ENCODE measurements at regions of chr20 and their contacts with region 1.

Region 1: GRCh38 chr20:36919715-36920333 is 31.7 kb downstream of the SAMHD1 start:
- DNase-seq: peak; percentile 62
- ATAC-seq: peak; percentile 52
- H3K4me3 Mint-ChIP-seq: no peak overlapping the region
- H3K27ac Mint-ChIP-seq: no peak overlapping the region
- H3K4me1 Mint-ChIP-seq: peaks cover 8% of the 10 kb centered on the region
- H3K27me3 Mint-ChIP-seq: no peaks in the 10 kb centered on the region

Region 2: DNA sequence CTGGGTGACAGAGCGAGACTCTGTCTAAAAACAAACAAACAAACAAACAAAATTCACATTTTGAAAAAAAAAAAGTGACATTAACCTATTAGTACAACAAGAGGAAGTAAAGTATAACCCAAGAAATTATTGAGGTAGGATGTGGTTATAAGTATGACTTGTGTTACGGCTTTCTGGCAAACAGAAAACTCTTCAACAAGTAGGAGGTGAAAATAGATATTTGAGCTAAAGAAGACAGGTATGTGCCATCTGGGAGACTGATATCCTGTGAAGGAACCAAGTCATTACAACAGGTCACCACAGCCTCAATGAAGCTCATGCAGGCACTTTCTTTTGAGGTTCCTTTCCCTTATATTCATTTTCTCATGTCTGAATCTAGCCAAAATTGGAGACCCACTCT is 15.1 kb before region 1 on chr20:
- CTCF ChIA-PET with region 1: interaction called, 15 read pairs
- POLR2A ChIA-PET with region 1: interaction called, 4 read pairs
- DNase-seq: no peak
- ATAC-seq: peak; percentile 51
- H3K4me3 Mint-ChIP-seq: peak overlapping the region; percentile 44
- H3K27ac Mint-ChIP-seq: peak overlapping the region; percentile 78
- H3K4me1 Mint-ChIP-seq: peaks cover 29% of the 10 kb centered on the region
- H3K27me3 Mint-ChIP-seq: no peaks in the 10 kb centered on the region

Region 3: DNA sequence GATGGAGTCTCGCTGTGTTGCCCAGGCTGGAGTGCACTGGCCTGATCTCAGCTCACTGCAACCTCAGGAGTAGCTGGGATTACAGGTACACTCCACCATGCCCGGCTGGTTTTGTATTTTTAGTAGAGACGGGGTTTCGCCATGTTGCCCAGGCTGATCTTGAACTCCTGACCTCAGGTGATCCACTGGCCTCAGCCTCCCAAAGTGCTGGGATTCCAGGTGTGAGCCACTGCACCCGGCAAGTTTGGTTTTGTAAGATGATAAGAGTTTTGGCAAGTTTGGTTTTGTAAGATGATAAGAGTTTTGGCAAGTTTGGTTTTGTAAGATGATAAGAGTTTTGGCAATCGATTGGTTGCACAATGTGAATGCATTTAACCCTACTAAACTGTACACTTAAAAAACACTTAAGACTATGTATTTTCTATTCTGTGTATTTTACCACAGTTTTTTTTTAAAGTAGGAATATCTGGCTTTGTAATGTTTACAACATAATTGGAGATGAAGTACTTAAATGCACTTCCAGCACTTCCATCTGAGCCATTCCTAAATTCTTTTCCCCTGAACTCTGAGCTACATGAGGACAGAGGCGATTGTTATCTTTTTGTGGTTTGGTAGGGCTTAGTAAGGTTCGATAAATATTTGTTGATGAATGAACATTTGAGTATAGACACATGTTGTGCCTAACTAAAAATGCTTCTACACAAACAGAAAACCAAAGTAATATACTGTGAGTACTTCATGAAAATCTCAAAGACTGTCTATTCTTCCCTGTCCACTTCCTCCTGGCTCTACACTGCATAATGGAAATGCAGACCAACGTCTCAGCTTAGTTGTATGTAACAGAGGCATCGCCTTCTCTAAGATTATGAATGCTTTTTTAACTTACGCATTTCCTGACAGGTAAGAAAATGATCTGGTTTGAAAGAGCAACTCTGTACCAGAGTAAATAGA is 12.9 kb after region 1 on chr20:
- CTCF ChIA-PET with region 1: interaction called, 13 read pairs
- POLR2A ChIA-PET with region 1: no interaction called
- DNase-seq: no peak
- ATAC-seq: no peak
- H3K4me3 Mint-ChIP-seq: no peak overlapping the region
- H3K27ac Mint-ChIP-seq: peak overlapping the region; percentile 34
- H3K4me1 Mint-ChIP-seq: peaks cover 46% of the 10 kb centered on the region
- H3K27me3 Mint-ChIP-seq: no peaks in the 10 kb centered on the region